A673 (cell line): ENCODE measurements at regions of chr10 and their contacts with region 1.

Region 1: DNA sequence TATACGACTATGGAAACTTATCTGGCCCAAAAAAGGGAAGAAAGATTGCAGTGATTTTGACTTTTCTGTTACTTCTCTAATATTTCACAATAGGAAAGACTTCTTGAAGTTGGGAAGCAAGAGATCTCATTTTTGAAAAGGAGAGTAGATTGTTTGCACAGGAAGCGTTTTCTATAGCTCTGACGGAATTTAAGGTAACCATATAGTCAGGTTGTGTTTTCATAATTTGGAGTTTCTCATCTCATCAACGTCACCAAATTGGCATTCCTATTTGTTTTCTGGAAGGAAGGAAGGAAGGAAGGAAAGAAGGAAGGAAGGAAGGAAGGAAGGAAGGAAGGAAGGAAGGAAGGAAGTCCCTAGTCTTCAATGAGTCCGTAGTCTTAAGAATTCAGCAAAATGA is 732.0 kb downstream of the XPNPEP1 start:
- DNase-seq: peak; percentile 96
- H3K4me3 ChIP-seq: peak overlapping the region; percentile 23
- H3K27ac ChIP-seq: peak overlapping the region; percentile 99
- H3K4me1 ChIP-seq: peaks cover 34% of the 10 kb centered on the region
- H3K27me3 ChIP-seq: no peaks in the 10 kb centered on the region
- CTCF ChIP-seq: no peak

Region 2: GRCh38 chr10:108592956-108593355 is 598.4 kb before region 1 on chr10:
- CTCF ChIA-PET with region 1: no interaction called
- POLR2A ChIA-PET with region 1: no interaction called
- intact Hi-C with region 1: loop called (anchors 2 kb)
- DNase-seq: peak; percentile 88
- H3K4me3 ChIP-seq: no peak overlapping the region
- H3K27ac ChIP-seq: peak overlapping the region; percentile 48
- H3K4me1 ChIP-seq: peaks cover 51% of the 10 kb centered on the region
- H3K27me3 ChIP-seq: no peaks in the 10 kb centered on the region
- CTCF ChIP-seq: no peak

Region 3: GRCh38 chr10:108970016-108970415 is 221.3 kb before region 1 on chr10:
- CTCF ChIA-PET with region 1: no interaction called
- POLR2A ChIA-PET with region 1: no interaction called
- intact Hi-C with region 1: no loop called
- DNase-seq: peak; percentile 66
- H3K4me3 ChIP-seq: no peak overlapping the region
- H3K27ac ChIP-seq: no peak overlapping the region
- H3K4me1 ChIP-seq: no peaks in the 10 kb centered on the region
- H3K27me3 ChIP-seq: no peaks in the 10 kb centered on the region
- CTCF ChIP-seq: no peak

Region 4: GRCh38 chr10:109386921-109387320 is 195.6 kb after region 1 on chr10:
- CTCF ChIA-PET with region 1: no interaction called
- POLR2A ChIA-PET with region 1: interaction called, 3 read pairs
- intact Hi-C with region 1: loop called (anchors 1 kb)
- DNase-seq: peak; percentile 88
- H3K4me3 ChIP-seq: no peak overlapping the region
- H3K27ac ChIP-seq: peak overlapping the region; percentile 94
- H3K4me1 ChIP-seq: peaks cover 38% of the 10 kb centered on the region
- H3K27me3 ChIP-seq: no peaks in the 10 kb centered on the region
- CTCF ChIP-seq: 0 out of 2 replicates have a peak, but pooled peaks have one; percentile 16

Region 5: DNA sequence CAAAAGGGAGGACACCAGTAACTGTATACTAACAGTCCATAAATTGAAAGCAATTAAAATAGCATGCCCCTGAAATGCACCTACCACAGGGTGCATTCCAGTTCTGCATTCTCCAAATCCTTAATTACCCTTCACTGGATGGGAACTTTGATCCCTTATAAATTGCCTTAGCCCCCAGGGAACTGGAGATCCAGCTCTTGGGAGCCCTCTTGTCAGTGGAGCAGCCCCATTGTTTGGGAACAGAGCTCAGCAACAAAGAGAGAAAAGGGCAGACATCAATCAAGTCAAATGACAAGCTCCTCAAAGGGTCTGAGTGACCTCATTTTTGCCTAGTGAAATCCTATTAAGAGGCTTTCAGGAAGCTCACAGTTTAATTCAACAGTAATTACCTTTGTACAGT is 259.4 kb after region 1 on chr10:
- CTCF ChIA-PET with region 1: interaction called, 3 read pairs
- POLR2A ChIA-PET with region 1: no interaction called
- intact Hi-C with region 1: loop called (anchors 1 kb)
- DNase-seq: peak; percentile 82
- H3K4me3 ChIP-seq: no peak overlapping the region
- H3K27ac ChIP-seq: no peak overlapping the region
- H3K4me1 ChIP-seq: peaks cover 42% of the 10 kb centered on the region
- H3K27me3 ChIP-seq: no peaks in the 10 kb centered on the region
- CTCF ChIP-seq: no peak

Region 6: GRCh38 chr10:109773288-109774120 is 582.2 kb after region 1 on chr10:
- CTCF ChIA-PET with region 1: no interaction called
- POLR2A ChIA-PET with region 1: no interaction called
- intact Hi-C with region 1: loop called (anchors 1 kb)
- DNase-seq: peak; percentile 71
- H3K4me3 ChIP-seq: no peak overlapping the region
- H3K27ac ChIP-seq: no peak overlapping the region
- H3K4me1 ChIP-seq: peaks cover 17% of the 10 kb centered on the region
- H3K27me3 ChIP-seq: no peaks in the 10 kb centered on the region
- CTCF ChIP-seq: peak; percentile 79